Aorta (tissue), 5 donors: ENCODE measurements at regions of chr4 and their contacts with region 1.

Region 1: DNA sequence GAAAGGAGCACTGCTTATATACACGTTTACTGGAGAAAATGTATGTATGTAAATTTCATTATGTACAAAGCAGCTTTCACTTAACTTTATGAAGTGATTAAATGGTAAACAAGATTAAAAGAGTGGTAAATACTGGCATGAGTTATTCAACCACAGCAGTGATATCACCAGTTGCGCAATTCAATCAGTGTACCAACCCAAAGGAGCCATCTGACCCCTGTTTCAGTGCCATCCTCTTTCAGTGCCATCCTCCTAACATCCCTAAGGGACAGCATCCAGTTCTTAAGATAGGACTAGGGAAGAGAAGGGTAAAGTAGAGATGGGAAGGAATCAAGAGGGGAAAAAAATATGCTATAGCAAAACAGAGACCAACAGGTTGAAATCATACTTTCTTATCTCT is 16.2 kb downstream of the HPF1 start:
- DNase-seq: no peak
- ATAC-seq: no peak
- H3K4me3 ChIP-seq: no peak overlapping the region
- H3K27ac ChIP-seq: no peak overlapping the region
- H3K4me1 ChIP-seq: no peaks in the 10 kb centered on the region
- H3K27me3 ChIP-seq: no peaks in the 10 kb centered on the region

Region 2: GRCh38 chr4:169720529-169720928 is 21.0 kb before region 1 on chr4:
- intact Hi-C with region 1: loop called in 1 of 2 experiments (anchors 2 kb)
- DNase-seq: no peak
- ATAC-seq: no peak
- H3K4me3 ChIP-seq: no peak overlapping the region
- H3K27ac ChIP-seq: no peak overlapping the region
- H3K4me1 ChIP-seq: no peaks in the 10 kb centered on the region
- H3K27me3 ChIP-seq: no peaks in the 10 kb centered on the region